ENCODE measurements at regions of chr18 and their contacts with region 1.

Region 1: GRCh38 chr18:34329840-34330239 is 105.1 kb upstream of the NOL4 start:
- DNase-seq: no peak
- ATAC-seq: no peak
- H3K4me3 ChIP-seq: no peak overlapping the region
- H3K27ac ChIP-seq: no peak overlapping the region
- H3K4me1 ChIP-seq: no peaks in the 10 kb centered on the region
- H3K27me3 ChIP-seq: no peaks in the 10 kb centered on the region
- CTCF ChIP-seq: no peak
- POLR2A ChIP-seq: no peak
- RAD21 ChIP-seq: no peak

Region 2: DNA sequence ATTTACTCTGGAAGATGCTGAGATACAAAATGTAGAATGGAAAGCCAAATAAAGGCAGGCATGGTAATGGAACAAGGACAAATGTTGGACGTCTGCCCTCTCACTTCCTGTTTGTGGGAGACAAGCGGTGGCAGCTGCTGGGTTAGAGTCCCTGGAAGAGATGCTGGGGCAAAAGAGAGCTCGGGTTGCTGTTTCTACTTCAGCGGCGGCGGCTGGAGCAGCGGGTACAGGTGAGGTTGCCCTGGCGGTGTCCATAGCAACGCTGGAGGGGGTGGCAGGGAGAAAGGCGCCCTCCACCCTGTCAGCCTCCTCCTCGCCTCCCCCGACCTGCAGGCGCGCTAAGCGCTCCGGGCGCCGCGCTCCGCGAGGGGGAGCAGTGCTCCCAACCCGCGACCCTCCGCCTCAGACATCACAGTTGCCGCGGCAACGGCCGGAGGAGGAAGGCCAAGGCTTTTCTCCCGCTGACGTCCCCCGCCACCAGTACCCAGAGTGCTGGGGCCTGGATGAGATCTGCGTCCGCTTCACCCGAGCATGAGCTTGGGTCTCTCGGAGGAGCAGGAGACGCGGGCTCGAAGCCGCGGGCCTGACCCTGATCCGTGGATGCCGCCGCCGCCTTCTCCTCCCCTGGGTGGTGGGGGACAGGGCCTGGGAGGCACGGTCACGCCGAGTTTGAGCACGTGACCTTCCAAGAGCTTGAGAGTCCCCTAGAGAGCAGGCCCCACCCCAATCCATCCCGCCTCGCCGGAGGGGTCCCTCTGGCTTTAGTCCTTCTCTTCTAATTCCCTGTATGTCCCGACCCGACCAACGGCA is 170.8 kb before region 1 on chr18:
- CTCF ChIA-PET with region 1: no interaction called
- POLR2A ChIA-PET with region 1: no interaction called
- dilution Hi-C with region 1: no loop called
- in situ Hi-C with region 1: no loop called
- intact Hi-C with region 1: no loop called
- DNase-seq: peak; percentile 0
- ATAC-seq: peak; percentile 62
- H3K4me3 ChIP-seq: no peak overlapping the region
- H3K27ac ChIP-seq: no peak overlapping the region
- H3K4me1 ChIP-seq: no peaks in the 10 kb centered on the region
- H3K27me3 ChIP-seq: peaks cover 4% of the 10 kb centered on the region; the same call in 1 of the 2 replicates
- CTCF ChIP-seq: no peak
- POLR2A ChIP-seq: no peak
- RAD21 ChIP-seq: no peak

Region 3: GRCh38 chr18:34203866-34204265 is 126.0 kb before region 1 on chr18:
- CTCF ChIA-PET with region 1: no interaction called
- POLR2A ChIA-PET with region 1: no interaction called
- dilution Hi-C with region 1: no loop called
- in situ Hi-C with region 1: no loop called
- intact Hi-C with region 1: no loop called
- DNase-seq: no peak
- ATAC-seq: no peak
- H3K4me3 ChIP-seq: no peak overlapping the region
- H3K27ac ChIP-seq: no peak overlapping the region
- H3K4me1 ChIP-seq: no peaks in the 10 kb centered on the region
- H3K27me3 ChIP-seq: no peaks in the 10 kb centered on the region
- CTCF ChIP-seq: no peak
- POLR2A ChIP-seq: no peak
- RAD21 ChIP-seq: no peak

Region 4: DNA sequence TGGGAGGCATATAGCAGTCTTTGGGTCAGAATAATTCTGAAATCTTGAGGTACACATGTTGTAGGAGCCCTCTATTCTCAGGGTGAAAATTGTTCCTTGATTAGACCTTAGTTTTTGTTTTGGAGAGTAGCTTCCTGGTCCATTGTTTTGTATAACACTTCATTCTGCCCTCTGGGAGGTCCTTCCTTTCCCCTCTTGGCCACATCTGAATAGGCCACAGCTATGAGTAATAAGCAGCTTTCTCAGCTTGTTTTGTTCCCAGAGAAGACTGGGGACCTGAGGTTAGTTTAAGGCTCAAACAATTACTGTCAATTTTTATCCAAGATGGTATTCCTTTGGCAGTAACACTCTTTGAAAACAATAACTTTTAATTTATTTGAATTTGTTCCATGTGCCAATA is 32.6 kb before region 1 on chr18:
- CTCF ChIA-PET with region 1: no interaction called
- POLR2A ChIA-PET with region 1: no interaction called
- dilution Hi-C with region 1: no loop called
- in situ Hi-C with region 1: no loop called
- intact Hi-C with region 1: loop called (anchors 1 kb)
- DNase-seq: no peak
- ATAC-seq: no peak
- H3K4me3 ChIP-seq: no peak overlapping the region
- H3K27ac ChIP-seq: no peak overlapping the region
- H3K4me1 ChIP-seq: no peaks in the 10 kb centered on the region
- H3K27me3 ChIP-seq: no peaks in the 10 kb centered on the region
- CTCF ChIP-seq: no peak
- POLR2A ChIP-seq: no peak
- RAD21 ChIP-seq: no peak

Measured in IMR-90 (cell line).